CD4-positive, alpha-beta T cell (primary cell): ENCODE measurements at regions of chr9 and their contacts with region 1.

Region 1: DNA sequence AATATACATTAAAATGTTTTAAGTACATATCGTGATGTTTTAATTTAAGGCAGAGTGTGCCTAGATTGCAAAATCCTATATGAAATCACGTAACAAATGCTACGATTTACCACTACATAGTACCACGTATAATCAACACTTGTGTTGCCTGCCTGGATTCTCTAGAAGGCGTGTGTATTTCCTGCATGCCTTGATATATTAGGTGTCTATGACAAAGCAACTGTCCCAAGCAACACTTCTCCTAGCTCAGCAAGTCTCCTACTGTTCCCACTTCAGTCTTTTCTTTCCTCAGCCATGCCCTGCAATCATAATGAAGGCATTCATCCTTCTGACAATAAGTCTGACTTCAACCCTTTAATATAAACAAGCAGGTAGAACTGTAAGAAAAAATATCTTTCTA is 89.6 kb downstream of the PTPRD start:
- DNase-seq: no peak
- ATAC-seq: no peak
- H3K4me3 ChIP-seq: no peak overlapping the region
- H3K4me3 Mint-ChIP-seq: no peak overlapping the region
- H3K27ac ChIP-seq: no peak overlapping the region
- H3K27ac Mint-ChIP-seq: no peak overlapping the region
- H3K4me1 ChIP-seq: no peaks in the 10 kb centered on the region
- H3K4me1 Mint-ChIP-seq: no peaks in the 10 kb centered on the region
- H3K27me3 ChIP-seq: no peaks in the 10 kb centered on the region
- H3K27me3 Mint-ChIP-seq: no peaks in the 10 kb centered on the region
- CTCF ChIP-seq: no peak

Region 2: GRCh38 chr9:10479172-10479571 is 44.0 kb before region 1 on chr9:
- CTCF ChIA-PET with region 1: no interaction called
- POLR2A ChIA-PET with region 1: no interaction called
- intact Hi-C with region 1: loop called in 1 of 2 experiments (anchors 5 kb)
- DNase-seq: no peak
- ATAC-seq: no peak
- H3K4me3 ChIP-seq: no peak overlapping the region
- H3K4me3 Mint-ChIP-seq: no peak overlapping the region
- H3K27ac ChIP-seq: no peak overlapping the region
- H3K27ac Mint-ChIP-seq: no peak overlapping the region
- H3K4me1 ChIP-seq: no peaks in the 10 kb centered on the region
- H3K4me1 Mint-ChIP-seq: no peaks in the 10 kb centered on the region
- H3K27me3 ChIP-seq: no peaks in the 10 kb centered on the region
- H3K27me3 Mint-ChIP-seq: no peaks in the 10 kb centered on the region
- CTCF ChIP-seq: no peak